Psoas muscle (tissue), 8 donors: ENCODE measurements at regions of chrX and their contacts with region 1.

Region 1: GRCh38 chrX:9867753-9868152 is 81.5 kb downstream of the SHROOM2 start:
- DNase-seq: no peak
- ATAC-seq: no peak
- H3K4me3 ChIP-seq: no peak overlapping the region
- H3K27ac ChIP-seq: no peak overlapping the region
- H3K4me1 ChIP-seq: no peaks in the 10 kb centered on the region
- H3K27me3 ChIP-seq: no peaks in the 10 kb centered on the region
- CTCF ChIP-seq: no peak

Region 2: GRCh38 chrX:9847071-9847470 is 20.7 kb before region 1 on chrX:
- intact Hi-C with region 1: loop called in 1 of 2 experiments (anchors 1 kb)
- DNase-seq: no peak
- ATAC-seq: no peak
- H3K4me3 ChIP-seq: no peak overlapping the region
- H3K27ac ChIP-seq: no peak overlapping the region
- H3K4me1 ChIP-seq: no peaks in the 10 kb centered on the region
- H3K27me3 ChIP-seq: no peaks in the 10 kb centered on the region
- CTCF ChIP-seq: no peak